Activated T-helper 1 cell treated with anti-CD3 and anti-CD28 coated beads, Interleukin-12 subunit alpha, Interleukin-12 subunit beta, Interleukin-2, Interleukin-4 antibody, amounts not matched to agents 30 ng/mL and 10 ng/mL and 1 ng/mL, durations not matched to agents 14 hours and 24 hours and 36 hours (primary cell): ENCODE measurements at regions of chr6 and their contacts with region 1.

Region 1: GRCh38 chr6:37987018-37987417 is 167.5 kb downstream of the ZFAND3 start:
- DNase-seq: no peak
- H3K4me3 Mint-ChIP-seq: no peak overlapping the region
- H3K27ac Mint-ChIP-seq: peak overlapping the region; percentile 45
- H3K4me1 Mint-ChIP-seq: peaks cover 56% of the 10 kb centered on the region
- H3K27me3 Mint-ChIP-seq: no peaks in the 10 kb centered on the region

Region 2: GRCh38 chr6:37607944-37608343 is 379.1 kb before region 1 on chr6:
- intact Hi-C with region 1: no loop called
- DNase-seq: no peak
- H3K4me3 Mint-ChIP-seq: no peak overlapping the region
- H3K27ac Mint-ChIP-seq: no peak overlapping the region
- H3K4me1 Mint-ChIP-seq: no peaks in the 10 kb centered on the region
- H3K27me3 Mint-ChIP-seq: peaks cover 46% of the 10 kb centered on the region

Region 3: GRCh38 chr6:37819177-37819823 is 167.7 kb before region 1 on chr6 and contains the start of gene ZFAND3:
- intact Hi-C with region 1: loop called (anchors 1 kb)
- DNase-seq: peak; percentile 93
- H3K4me3 Mint-ChIP-seq: peak within 1 kb of the TSS; percentile 95
- H3K27ac Mint-ChIP-seq: peak within 1 kb of the TSS; percentile 97
- H3K4me1 Mint-ChIP-seq: peaks cover 52% of the 10 kb centered on the region
- H3K27me3 Mint-ChIP-seq: peaks cover 9% of the 10 kb centered on the region
- total RNA-seq, gene ZFAND3: 36.9 and 44.1 TPM in 2 replicates

Region 4: DNA sequence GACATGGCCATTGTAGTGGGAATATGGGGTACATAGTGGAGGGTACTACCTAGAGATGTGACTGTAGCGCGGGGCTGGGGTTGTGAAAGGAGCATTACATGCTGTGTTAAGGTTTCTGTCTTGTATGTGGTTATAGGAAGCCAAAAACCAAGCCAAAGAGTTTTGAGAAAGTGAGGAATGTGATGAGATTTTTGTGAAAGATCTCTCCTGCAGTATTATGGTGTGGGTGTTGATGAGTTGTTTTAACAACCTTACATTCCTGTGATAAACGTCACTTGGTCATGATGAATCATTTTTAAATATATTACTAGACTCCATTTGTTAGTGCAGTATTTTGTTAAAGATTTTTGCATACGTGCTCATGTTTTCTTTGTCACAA is 118.6 kb before region 1 on chr6:
- intact Hi-C with region 1: loop called (anchors 2 kb)
- DNase-seq: no peak
- H3K4me3 Mint-ChIP-seq: no peak overlapping the region
- H3K27ac Mint-ChIP-seq: peak overlapping the region; percentile 49
- H3K4me1 Mint-ChIP-seq: peaks cover 42% of the 10 kb centered on the region
- H3K27me3 Mint-ChIP-seq: no peaks in the 10 kb centered on the region

Region 5: GRCh38 chr6:38027685-38028373 is 40.8 kb after region 1 on chr6:
- intact Hi-C with region 1: loop called (anchors 2 kb)
- DNase-seq: no peak
- H3K4me3 Mint-ChIP-seq: no peak overlapping the region
- H3K27ac Mint-ChIP-seq: no peak overlapping the region
- H3K4me1 Mint-ChIP-seq: peaks cover 40% of the 10 kb centered on the region
- H3K27me3 Mint-ChIP-seq: no peaks in the 10 kb centered on the region

Region 6: DNA sequence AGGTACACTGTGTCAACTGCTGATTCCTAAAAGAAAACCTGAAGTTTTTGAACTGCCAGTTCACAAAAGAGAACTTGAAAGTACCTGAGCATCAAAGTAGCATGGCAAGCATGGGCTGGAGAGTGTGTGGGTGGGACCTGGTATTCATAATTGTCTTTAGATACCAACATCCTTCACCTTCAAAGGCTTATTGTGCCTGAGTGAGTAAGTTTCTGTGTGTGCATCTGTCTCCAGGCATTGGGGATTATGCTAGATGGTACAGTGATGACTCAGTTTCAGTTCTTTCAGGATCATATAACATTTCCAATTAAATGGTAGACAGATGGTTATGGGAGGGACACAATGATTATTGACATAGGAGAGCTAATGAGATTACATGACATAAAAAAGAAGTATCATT is 71.0 kb after region 1 on chr6:
- intact Hi-C with region 1: loop called (anchors 5 kb)
- DNase-seq: no peak
- H3K4me3 Mint-ChIP-seq: no peak overlapping the region
- H3K27ac Mint-ChIP-seq: peak overlapping the region; percentile 18
- H3K4me1 Mint-ChIP-seq: peaks cover 23% of the 10 kb centered on the region
- H3K27me3 Mint-ChIP-seq: no peaks in the 10 kb centered on the region